ENCODE measurements at regions of chr11 and their contacts with region 1.

Region 1: DNA sequence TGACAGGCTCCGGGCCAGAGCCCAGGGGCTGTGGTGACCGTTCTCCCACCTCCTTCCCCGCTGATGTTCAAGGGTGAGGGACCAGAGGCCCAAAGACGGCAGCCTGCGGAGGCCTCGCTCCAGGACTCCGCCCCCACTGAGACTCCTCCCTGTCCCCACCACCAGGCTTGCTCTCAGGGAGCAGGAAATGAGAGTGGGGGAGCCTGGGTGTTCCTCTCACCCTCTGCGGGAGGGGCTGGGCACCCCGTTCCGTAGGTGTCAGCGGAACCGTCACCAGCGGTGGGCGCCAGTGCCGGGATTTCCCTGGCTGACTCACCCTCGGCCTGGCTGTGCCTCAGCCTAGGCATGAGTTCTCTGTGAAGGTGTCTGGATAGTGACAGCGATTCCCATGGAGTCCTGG is 15.7 kb downstream of the DAGLA start:
- DNase-seq: peak; percentile 97
- H3K4me3 Mint-ChIP-seq: peak overlapping the region; percentile 77
- H3K27ac Mint-ChIP-seq: peak overlapping the region; percentile 91
- H3K4me1 Mint-ChIP-seq: peaks cover 20% of the 10 kb centered on the region
- H3K27me3 Mint-ChIP-seq: no peaks in the 10 kb centered on the region

Region 2: DNA sequence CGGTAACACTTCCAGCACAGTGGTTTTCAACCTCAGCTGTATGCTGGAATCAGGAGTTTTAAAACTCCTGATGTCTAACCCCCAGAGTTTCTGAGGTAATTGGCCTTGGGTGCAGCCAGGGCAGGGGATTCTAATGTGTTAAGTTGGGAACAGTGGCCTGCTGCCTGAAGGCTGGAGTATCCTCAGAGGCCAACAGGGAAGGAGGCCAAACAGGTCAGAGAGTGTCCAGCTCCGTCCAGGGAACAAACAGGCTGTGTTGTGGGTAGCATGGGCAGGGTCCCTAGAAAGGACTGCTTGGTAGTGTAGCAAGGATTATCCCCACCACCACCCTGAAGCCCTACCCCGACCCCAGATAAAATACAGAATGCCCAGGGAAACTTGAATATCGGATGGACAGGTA is 26.5 kb before region 1 on chr11:
- intact Hi-C with region 1: no loop called
- DNase-seq: no peak
- H3K4me3 Mint-ChIP-seq: no peak overlapping the region
- H3K27ac Mint-ChIP-seq: no peak overlapping the region
- H3K4me1 Mint-ChIP-seq: no peaks in the 10 kb centered on the region
- H3K27me3 Mint-ChIP-seq: peaks cover 16% of the 10 kb centered on the region

Region 3: GRCh38 chr11:61679893-61680621 is 15.9 kb before region 1 on chr11 and contains the start of gene DAGLA:
- intact Hi-C with region 1: loop called (anchors 1 kb)
- DNase-seq: peak; percentile 94
- H3K4me3 Mint-ChIP-seq: peak within 1 kb of the TSS; percentile 75
- H3K27ac Mint-ChIP-seq: peak within 1 kb of the TSS; percentile 9
- H3K4me1 Mint-ChIP-seq: peaks cover 5% of the 10 kb centered on the region
- H3K27me3 Mint-ChIP-seq: peaks cover 31% of the 10 kb centered on the region
- total RNA-seq, gene DAGLA: 0.09 and 0.14 TPM in 2 replicates

Region 4: GRCh38 chr11:61733120-61733978 is 37.4 kb after region 1 on chr11:
- intact Hi-C with region 1: loop called (anchors 1 kb)
- DNase-seq: peak; percentile 95
- H3K4me3 Mint-ChIP-seq: no peak overlapping the region
- H3K27ac Mint-ChIP-seq: no peak overlapping the region
- H3K4me1 Mint-ChIP-seq: peaks cover 2% of the 10 kb centered on the region
- H3K27me3 Mint-ChIP-seq: no peaks in the 10 kb centered on the region

Region 5: GRCh38 chr11:61797263-61797944 is 101.5 kb after region 1 on chr11:
- intact Hi-C with region 1: no loop called
- DNase-seq: peak; percentile 92
- H3K4me3 Mint-ChIP-seq: no peak overlapping the region
- H3K27ac Mint-ChIP-seq: peak overlapping the region; percentile 11
- H3K4me1 Mint-ChIP-seq: peaks cover 34% of the 10 kb centered on the region
- H3K27me3 Mint-ChIP-seq: no peaks in the 10 kb centered on the region

Region 6: DNA sequence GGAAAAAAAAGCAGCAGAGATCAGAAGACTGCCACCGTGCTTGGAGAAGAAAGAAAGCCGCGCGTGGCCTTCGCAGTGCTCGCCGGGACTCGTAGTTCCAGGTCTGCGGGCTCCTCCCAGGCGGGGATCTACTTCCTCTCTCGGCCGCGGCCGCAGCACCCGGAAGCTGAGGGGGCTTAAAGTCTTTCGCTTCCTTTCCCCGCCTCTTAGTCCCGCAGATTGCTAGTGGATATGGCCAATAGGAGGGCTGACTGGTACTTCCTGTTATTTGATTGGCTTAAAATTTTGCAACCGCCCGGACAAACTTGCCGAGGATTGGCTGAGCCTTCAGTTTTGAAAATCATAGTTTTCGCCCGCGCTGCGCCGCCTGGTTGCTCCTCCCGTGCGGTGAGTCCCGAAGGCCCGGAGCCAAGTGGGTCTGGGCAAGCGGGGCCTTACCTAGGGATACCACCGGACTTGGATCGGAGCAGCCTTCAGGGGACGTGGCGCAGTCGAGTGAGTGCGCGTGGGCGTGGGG is 427.8 kb after region 1 on chr11 and contains the start of gene INCENP:
- intact Hi-C with region 1: loop called (anchors 5 kb)
- DNase-seq: peak; percentile 98
- H3K4me3 Mint-ChIP-seq: peak within 1 kb of the TSS; percentile 88
- H3K27ac Mint-ChIP-seq: peak within 1 kb of the TSS; percentile 81
- H3K4me1 Mint-ChIP-seq: peaks cover 30% of the 10 kb centered on the region
- H3K27me3 Mint-ChIP-seq: peaks cover 3% of the 10 kb centered on the region
- total RNA-seq, gene INCENP: 95.0 and 102 TPM in 2 replicates

Measured in activated CD4-positive, alpha-beta T cell treated with anti-CD3 and anti-CD28 coated beads, Interleukin-2, amount 10 ng/mL, durations not matched to agents 24 days and 14 days (primary cell).